ENCODE measurements at regions of chr14 and their contacts with region 1.

Region 1: GRCh38 chr14:89040460-89041259 is 216.2 kb downstream of the TTC8 start:
- DNase-seq: peak; percentile 92

Region 2: DNA sequence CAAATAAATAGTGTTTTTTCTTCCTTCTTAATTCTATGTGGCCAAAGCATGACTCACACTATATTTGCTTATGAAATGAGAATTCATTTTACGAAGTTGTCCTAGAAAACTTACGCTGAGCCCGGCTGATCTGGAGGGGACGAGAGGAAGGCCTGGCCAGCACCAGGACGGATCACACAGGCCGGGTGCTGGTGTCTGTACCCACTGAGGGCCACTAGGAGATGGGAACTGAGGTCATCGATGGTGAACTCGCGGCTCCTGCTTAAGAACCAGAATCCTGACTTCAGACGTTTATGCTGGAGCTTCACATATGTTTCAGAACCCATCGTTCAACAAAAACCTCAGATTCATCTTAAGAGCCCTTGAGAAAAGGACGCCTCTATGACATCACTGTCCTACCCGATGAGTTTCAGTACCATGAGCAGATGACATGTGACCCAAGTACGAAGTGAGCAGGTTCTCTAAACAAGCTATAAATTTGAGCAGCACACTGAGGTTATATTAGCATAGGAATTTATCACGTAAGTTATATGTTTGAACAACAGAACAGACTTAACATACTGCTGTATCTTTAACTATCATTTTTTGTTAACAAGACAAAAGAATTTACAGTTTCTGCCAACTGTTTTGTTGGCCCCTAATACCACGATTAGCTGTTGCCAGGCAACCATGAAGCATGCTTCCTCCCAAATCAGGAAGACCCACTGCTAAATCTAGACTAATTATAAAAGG is 264.5 kb after region 1 on chr14:
- in situ Hi-C with region 1: no loop called
- DNase-seq: peak; percentile 33

Region 3: DNA sequence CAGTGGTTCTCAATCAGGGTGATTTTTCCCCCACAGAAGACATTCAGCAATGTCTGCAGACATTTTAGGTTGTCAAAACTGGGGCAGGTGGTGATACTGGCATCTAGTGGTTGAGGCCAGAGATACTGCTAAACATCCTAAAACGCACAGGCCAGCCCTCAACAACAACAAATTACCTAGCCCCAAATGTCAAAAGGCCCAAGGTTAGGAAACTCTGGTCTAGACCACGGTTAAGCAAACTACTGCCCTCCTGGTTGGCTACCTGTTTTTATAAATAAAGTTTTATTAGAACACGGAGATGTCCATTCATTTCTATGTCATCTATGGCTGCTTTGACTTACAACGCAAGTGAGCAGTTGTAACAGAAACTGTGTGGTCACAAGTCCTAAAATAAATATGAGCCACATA is 727.2 kb after region 1 on chr14:
- in situ Hi-C with region 1: loop called (anchors 25 kb)
- DNase-seq: peak; percentile 72

Region 4: DNA sequence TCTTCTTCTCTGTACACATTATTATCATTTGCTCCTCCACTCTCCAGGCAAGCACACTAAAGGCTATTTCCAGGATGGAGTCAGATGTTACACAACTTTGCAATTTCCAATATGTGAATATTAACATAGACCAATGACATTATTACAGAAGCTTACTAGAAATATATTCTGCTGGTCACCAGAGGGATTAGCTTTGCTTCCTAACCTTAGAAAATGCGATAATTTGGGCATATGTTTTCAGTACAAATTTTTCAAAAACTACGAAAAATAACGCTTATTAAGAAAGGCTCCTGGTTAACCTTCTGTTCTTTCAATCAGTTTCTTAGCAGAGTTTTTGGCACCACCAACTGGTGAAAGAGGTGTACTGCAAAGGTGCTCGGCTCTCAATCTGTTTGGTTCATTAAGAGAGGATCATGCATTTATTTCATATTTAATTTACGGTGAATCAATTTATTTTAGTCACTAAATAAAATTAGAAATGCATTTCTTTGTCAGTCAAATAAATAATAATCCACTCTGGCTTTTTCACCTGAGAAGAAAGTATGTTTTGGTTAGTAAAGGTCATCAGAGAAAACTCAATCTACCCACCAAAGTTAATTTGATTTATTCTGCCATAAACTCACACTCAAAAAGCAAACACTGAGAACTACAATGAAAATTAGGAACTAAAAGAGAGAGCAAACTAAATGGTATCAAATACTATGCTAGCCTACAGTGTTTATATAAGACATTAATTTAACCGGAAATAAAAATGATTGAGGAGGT is 874.6 kb after region 1 on chr14:
- in situ Hi-C with region 1: loop called (anchors 25 kb)
- DNase-seq: peak; percentile 80

Measured in KBM-7 (cell line).